BJ (cell line): ENCODE measurements at regions of chr12 and their contacts with region 1.

Region 1: GRCh38 chr12:52372216-52373154 is 5.2 kb upstream of the KRT85 start:
- DNase-seq: peak; percentile 47
- H3K4me3 ChIP-seq: no peak overlapping the region
- H3K27me3 ChIP-seq: peaks cover 12% of the 10 kb centered on the region
- CTCF ChIP-seq: peak; percentile 93

Region 2: DNA sequence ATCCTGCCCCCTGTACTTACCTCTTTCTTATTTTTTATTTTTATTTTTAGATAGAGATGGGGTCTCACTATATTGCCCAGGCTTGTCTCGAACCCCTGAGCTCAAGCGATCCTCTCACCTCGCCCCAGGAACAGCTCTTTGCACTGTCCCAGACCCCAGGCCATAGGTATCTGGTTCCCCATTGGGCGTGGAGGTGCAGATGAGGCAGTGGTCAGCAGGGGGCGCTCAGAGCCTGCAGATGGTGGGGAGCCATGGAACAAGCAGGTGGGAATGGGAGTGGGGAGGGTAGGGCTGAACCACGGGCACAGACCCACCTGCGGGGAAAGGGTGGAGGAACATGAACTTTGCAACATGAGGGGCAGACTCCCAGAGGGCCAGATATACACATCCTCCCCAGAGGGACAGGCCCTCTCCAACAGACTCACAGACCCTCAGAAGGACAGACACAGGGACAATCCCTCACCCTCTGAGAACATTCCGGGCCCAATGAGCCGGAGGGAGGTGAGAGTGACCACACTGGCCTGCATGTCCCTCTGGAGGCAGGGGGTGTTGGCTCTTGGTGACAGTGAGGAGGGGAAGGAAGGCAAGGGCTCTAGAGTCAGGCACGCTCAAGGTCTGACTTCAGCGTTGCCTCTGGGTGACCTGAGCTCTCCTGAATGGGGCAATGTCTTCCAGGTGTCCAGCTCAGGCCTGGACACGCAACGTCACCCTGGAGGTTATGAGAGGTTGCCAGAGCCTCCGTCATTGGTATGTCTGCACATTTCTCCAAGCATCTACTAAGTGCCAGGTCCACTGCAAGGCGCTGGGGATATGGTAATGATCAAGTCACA is 215.5 kb before region 1 on chr12:
- CTCF ChIA-PET with region 1: interaction called, 43 read pairs
- POLR2A ChIA-PET with region 1: no interaction called
- DNase-seq: no peak
- H3K4me3 ChIP-seq: no peak overlapping the region
- H3K27me3 ChIP-seq: no peaks in the 10 kb centered on the region
- CTCF ChIP-seq: peak; percentile 96

Region 3: GRCh38 chr12:52390739-52391617 is 18.5 kb after region 1 on chr12:
- CTCF ChIA-PET with region 1: interaction called, 23 read pairs
- POLR2A ChIA-PET with region 1: no interaction called
- DNase-seq: no peak
- H3K4me3 ChIP-seq: no peak overlapping the region
- H3K27me3 ChIP-seq: peaks cover 9% of the 10 kb centered on the region; the same call in 1 of the 2 replicates
- CTCF ChIP-seq: peak; percentile 76

Region 4: GRCh38 chr12:52404956-52405355 is 32.5 kb after region 1 on chr12:
- CTCF ChIA-PET with region 1: no interaction called
- POLR2A ChIA-PET with region 1: no interaction called
- DNase-seq: no peak
- H3K4me3 ChIP-seq: no peak overlapping the region
- H3K27me3 ChIP-seq: peaks cover 8% of the 10 kb centered on the region
- CTCF ChIP-seq: no peak

Region 5: DNA sequence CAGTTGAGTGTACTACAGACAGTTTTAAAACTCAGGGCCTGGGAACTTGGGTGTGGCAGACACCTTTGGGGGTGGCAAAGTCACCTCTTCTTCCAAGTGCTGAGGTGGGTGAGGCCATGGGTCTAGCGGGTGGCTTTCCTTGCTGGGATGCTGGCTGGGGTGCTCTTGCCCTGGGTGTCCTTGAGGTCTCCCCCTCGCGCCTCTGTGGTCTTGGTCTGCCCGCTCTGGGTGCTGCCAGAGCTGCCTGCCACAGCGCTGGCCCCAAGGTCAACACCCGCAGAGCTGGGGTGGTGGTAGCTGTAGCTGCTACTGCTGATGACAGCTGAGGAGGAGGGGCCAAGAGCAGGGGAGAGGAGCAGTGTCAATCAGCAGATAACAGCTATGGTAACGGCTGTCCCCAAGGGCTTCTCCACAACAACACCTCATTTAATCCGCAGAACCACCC is 194.4 kb after region 1 on chr12:
- CTCF ChIA-PET with region 1: no interaction called
- POLR2A ChIA-PET with region 1: no interaction called
- DNase-seq: no peak
- H3K4me3 ChIP-seq: no peak overlapping the region
- H3K27me3 ChIP-seq: peaks cover 20% of the 10 kb centered on the region
- CTCF ChIP-seq: no peak

Region 6: DNA sequence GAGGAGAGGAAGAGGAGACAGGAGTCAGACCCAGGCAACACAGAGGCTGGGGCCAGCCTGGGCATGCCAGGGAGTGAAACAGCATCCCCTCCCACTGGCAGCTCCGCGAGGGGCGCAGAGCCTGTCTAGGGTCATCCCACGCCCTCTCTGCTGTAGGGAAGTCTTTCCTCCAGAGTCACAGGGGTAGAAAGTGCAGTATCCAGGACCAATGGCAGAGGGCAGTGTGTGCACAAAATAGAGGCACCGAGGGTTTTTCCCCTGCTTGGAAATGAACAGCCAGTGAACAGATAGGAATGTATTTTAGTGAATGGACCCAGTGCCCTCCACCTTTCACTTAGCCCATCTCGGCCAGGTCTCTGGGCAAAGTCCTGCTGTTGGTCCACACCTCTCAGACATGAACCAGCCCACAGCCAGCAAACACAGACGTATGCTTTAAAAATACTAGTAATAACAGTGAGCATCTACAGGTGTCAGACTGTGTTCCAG is 210.5 kb after region 1 on chr12:
- CTCF ChIA-PET with region 1: interaction called, 10 read pairs
- POLR2A ChIA-PET with region 1: no interaction called
- DNase-seq: no peak
- H3K4me3 ChIP-seq: no peak overlapping the region
- H3K27me3 ChIP-seq: peaks cover 16% of the 10 kb centered on the region
- CTCF ChIP-seq: peak; percentile 76

Region 7: GRCh38 chr12:52870351-52871290 is 498.1 kb after region 1 on chr12:
- CTCF ChIA-PET with region 1: interaction called, 13 read pairs
- POLR2A ChIA-PET with region 1: no interaction called
- DNase-seq: no peak
- H3K4me3 ChIP-seq: no peak overlapping the region
- H3K27me3 ChIP-seq: no peaks in the 10 kb centered on the region
- CTCF ChIP-seq: peak; percentile 75